ENCODE measurements at regions of chr1 and their contacts with region 1.

Region 1: DNA sequence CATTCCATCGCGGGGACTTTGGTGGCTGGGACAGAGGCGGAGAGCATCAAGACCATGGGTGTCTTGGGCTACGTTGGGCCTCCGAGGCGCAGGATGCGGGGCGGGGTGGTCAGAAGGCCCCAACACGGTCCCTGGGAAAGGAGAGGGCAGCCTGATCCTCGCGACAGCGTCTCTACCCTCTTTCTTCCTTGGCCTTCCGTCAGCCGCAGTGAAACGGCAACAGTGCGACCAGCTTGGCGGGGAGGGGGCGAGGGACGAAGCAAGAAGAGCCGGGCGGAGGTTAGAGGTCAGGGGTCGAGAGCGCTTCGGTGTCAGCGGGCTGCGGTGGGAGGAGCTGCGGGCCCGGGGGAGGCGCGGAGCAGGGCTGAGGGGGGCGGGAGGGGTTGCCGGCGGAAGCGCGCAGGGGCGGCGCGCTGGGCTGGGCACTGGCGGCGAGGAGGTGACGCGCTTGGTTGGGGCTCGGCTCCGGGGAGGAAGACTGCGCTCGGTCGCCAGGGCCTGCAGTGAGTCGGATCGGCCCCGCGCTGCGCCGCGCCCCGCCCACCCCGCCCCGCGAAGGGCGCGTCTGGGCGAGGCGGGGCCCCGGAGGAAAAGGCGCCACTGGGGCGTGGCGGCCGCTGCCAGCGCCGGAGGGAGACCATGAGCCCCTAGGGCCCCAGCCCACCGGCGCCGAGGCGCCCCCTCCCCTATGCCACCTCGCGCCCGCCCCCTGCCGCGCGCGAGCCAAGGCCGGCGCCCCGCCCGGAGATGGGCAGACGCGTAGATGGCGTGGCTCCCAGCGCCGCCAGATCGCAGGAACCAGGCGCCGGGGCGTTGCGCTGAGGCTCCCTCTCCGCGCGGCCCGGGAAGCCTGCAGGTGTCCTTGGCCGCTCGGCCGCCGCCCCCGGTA is at the start of gene KCNC4:
- DNase-seq: peak; percentile 56
- ATAC-seq: peak; percentile 90
- H3K4me3 ChIP-seq: peak within 1 kb of the TSS; percentile 57 to 74
- H3K27ac ChIP-seq: peak within 1 kb of the TSS; percentile 83
- H3K4me1 ChIP-seq: peaks cover 0 to 23% of the 10 kb centered on the region in 2 experiments; a peak in 2 of 4 replicates
- H3K27me3 ChIP-seq: no peaks in the 10 kb centered on the region
- CTCF ChIP-seq: no peak
- POLR2A ChIP-seq: no peak
- RAD21 ChIP-seq: no peak
- total RNA-seq, gene KCNC4: 13.0 TPM

Region 2: GRCh38 chr1:109910123-109910962 is 299.6 kb before region 1 on chr1 and contains the start of gene CSF1:
- CTCF ChIA-PET with region 1: no interaction called
- POLR2A ChIA-PET with region 1: no interaction called
- RAD21 ChIA-PET with region 1: no interaction called
- intact Hi-C with region 1: no loop called
- DNase-seq: no peak
- ATAC-seq: peak; percentile 71
- H3K4me3 ChIP-seq: peak within 1 kb of the TSS; percentile 66 to 69
- H3K27ac ChIP-seq: peak within 1 kb of the TSS; percentile 55; the same call in 1 of the 2 replicates
- H3K4me1 ChIP-seq: peaks cover 0 to 15% of the 10 kb centered on the region in 2 experiments; a peak in 2 of 4 replicates
- H3K27me3 ChIP-seq: no peaks in the 10 kb centered on the region
- CTCF ChIP-seq: no peak
- POLR2A ChIP-seq: no peak
- RAD21 ChIP-seq: no peak
- total RNA-seq, gene CSF1: 3.0 TPM

Region 3: GRCh38 chr1:110196917-110197765 is 12.8 kb before region 1 on chr1:
- CTCF ChIA-PET with region 1: interaction called, 11 read pairs
- POLR2A ChIA-PET with region 1: no interaction called
- RAD21 ChIA-PET with region 1: no interaction called
- intact Hi-C with region 1: no loop called
- DNase-seq: peak; percentile 38
- ATAC-seq: peak; percentile 96
- H3K4me3 ChIP-seq: no peak overlapping the region
- H3K27ac ChIP-seq: no peak overlapping the region
- H3K4me1 ChIP-seq: peaks cover 0 to 6% of the 10 kb centered on the region in 2 experiments; a peak in 1 of 4 replicates
- H3K27me3 ChIP-seq: no peaks in the 10 kb centered on the region
- CTCF ChIP-seq: peak; percentile 69 to 95 (median 93)
- POLR2A ChIP-seq: no peak
- RAD21 ChIP-seq: peak; percentile 70

Region 4: DNA sequence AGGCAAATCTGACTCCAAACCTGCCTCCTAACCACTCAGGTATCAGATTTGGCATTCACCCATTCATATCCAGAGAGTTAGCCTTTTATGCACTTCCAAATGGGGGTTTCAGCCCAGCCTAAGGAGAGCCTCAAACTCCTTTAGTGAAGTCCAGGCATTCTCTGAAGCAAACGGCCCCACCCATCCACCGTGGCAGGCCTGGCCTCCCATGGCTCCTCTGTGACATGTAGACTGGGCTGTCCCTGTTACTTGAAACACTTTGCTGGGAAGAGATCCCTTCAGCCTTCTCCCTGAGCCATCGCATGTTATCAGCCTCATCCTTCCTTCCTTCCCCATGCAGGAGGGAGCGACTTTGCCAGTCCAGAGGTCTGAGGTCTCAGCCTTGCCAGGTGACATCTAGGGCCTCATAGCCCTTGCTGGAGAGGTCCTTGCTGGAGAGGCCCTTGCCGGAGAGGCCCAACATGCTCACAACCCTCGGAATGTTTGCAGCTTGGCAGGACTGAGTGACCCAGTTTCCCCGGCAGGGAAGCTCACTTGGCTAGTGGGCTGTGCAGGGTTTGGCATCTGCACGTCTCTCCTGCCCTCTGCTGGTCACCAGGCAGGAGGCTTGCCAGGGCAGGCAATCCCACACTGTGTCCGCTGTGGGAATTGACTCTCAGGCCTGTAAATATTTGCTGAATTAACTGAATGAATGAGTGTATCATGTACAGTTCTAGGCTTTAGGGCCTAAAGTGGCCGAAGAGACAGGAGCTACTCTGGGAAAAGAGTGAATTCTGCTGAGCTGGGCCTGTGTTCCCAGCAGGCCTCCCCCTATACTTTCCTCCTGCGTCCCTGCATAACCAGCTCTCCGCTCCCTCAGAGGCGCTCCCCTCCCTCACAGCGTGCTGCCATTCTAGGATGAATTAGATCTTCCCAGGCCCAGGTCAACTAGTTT is 102.5 kb after region 1 on chr1:
- CTCF ChIA-PET with region 1: interaction called, 206 read pairs
- POLR2A ChIA-PET with region 1: interaction called, 18 read pairs
- RAD21 ChIA-PET with region 1: interaction called, 47 to 62 read pairs
- intact Hi-C with region 1: loop called (anchors 1 kb)
- DNase-seq: peak; percentile 54
- ATAC-seq: peak; percentile 99
- H3K4me3 ChIP-seq: no peak overlapping the region
- H3K27ac ChIP-seq: no peak overlapping the region
- H3K4me1 ChIP-seq: peaks cover 2 to 20% of the 10 kb centered on the region in 2 experiments; a peak in 2 of 4 replicates
- H3K27me3 ChIP-seq: no peaks in the 10 kb centered on the region
- CTCF ChIP-seq: peak; percentile 93 to 97 (median 93)
- POLR2A ChIP-seq: no peak
- RAD21 ChIP-seq: peak; percentile 99

Region 5: DNA sequence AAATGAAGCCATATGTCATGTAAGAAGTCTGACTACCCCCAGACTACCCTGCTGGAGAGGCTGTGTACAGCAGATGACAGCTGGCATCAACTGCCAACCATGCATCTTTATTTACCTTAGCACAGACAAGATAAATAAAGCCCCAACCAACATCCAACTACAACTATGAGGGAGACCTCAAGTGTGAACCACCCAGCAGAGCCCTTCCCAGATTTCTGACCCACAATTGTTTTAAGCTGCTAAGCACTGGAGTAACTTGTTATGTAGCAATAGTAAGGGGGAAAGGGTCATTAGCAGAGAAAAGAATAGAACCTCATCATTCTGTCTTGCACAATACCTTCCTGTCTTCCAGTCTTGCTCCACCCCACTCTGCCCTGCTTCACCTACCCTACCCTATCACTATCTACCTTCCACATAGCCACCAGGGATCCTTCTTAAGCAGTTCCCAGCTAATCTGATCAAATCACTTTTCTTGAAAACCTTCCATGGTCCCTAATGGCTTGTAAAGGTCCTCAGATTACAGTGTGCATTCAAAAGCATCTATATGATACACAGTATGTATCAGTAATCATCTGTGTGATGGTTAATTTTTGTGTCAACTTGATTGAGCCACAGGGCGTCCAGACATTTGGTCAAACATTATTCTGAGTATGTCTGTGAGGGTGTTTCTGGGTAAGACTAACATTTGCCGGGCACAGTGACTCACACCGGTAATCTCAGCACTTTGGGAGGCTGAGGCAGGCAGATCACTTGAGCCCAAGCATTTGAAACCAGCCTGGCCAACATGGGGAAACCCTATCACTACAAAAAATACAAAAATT is 109.6 kb after region 1 on chr1:
- CTCF ChIA-PET with region 1: interaction called, 206 read pairs
- POLR2A ChIA-PET with region 1: no interaction called
- RAD21 ChIA-PET with region 1: interaction called in 1 of 2 experiments, 5 read pairs
- intact Hi-C with region 1: no loop called
- DNase-seq: no peak
- ATAC-seq: peak; percentile 40
- H3K4me3 ChIP-seq: no peak overlapping the region
- H3K27ac ChIP-seq: no peak overlapping the region
- H3K4me1 ChIP-seq: peaks cover 7 to 11% of the 10 kb centered on the region in 2 experiments; a peak in 2 of 4 replicates
- H3K27me3 ChIP-seq: no peaks in the 10 kb centered on the region
- CTCF ChIP-seq: peak in 2 of 3 experiments; percentile 13 to 25; a peak in 1 of 6 replicates
- POLR2A ChIP-seq: no peak
- RAD21 ChIP-seq: no peak

Region 6: DNA sequence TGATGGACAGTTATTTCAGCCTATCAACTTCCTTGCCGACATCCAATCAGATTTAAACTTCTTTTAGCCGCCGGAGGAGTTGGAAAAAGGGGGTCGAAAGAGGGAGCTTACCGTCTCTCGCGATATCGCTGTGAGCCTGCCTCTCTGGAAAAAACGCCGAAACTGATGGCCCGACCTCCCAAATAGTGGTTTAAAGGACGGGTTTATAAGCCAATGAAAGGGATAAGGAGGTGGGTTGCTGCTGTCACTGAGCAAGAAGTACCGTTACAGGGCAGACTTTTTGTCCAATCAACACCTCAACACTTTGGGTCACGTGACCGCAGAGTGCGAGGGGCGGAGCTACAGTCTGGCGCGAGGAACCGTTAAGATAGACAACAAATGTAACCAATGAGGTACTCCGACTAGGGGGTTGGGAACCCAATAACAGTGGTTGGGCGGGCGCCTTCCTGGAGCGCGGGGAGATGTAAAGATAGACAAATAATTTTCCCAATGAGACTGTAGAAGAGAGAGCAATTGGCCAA is 129.0 kb after region 1 on chr1 and contains the start of gene RBM15:
- CTCF ChIA-PET with region 1: interaction called, 49 read pairs
- POLR2A ChIA-PET with region 1: interaction called, 7 read pairs
- RAD21 ChIA-PET with region 1: interaction called, 5 read pairs
- intact Hi-C with region 1: no loop called
- DNase-seq: peak; percentile 100
- ATAC-seq: peak; percentile 81
- H3K4me3 ChIP-seq: peak within 1 kb of the TSS; percentile 69 to 89
- H3K27ac ChIP-seq: peak within 1 kb of the TSS; percentile 95
- H3K4me1 ChIP-seq: peaks cover 35 to 49% of the 10 kb centered on the region in 2 experiments
- H3K27me3 ChIP-seq: no peaks in the 10 kb centered on the region
- CTCF ChIP-seq: no peak
- POLR2A ChIP-seq: no peak
- RAD21 ChIP-seq: no peak
- total RNA-seq, gene RBM15: 44.0 TPM

Measured in HCT116 (cell line).